Activated CD4-positive, alpha-beta T cell treated with anti-CD3 and anti-CD28 coated beads, Interleukin-2, amount 10 ng/mL, durations not matched to agents 24 days and 14 days (primary cell): ENCODE measurements at regions of chr5 and their contacts with region 1.

Region 1: DNA sequence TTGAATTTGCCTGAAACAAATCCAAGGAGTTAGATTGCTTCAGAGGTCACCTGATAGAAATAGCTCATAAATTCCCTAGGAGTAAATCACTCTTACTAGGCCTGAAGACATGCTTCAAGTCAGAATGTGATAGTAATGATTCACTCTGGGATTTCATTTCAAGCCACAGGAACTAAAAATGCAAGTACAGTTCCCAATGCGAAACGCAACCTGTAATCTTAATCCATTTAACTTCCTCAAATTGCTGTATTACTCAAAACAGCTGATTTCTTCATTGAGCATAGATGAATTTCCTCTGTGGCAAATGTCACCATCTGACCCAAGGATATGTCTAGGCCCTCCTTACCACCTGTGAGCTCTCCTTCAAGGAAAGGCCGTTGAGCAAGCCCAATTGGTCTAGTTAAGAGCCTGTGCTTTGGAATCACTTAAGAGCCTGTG is 32.1 kb upstream of the IL6ST start:
- DNase-seq: no peak
- H3K4me3 Mint-ChIP-seq: no peak overlapping the region
- H3K27ac Mint-ChIP-seq: no peak overlapping the region
- H3K4me1 Mint-ChIP-seq: peaks cover 10% of the 10 kb centered on the region
- H3K27me3 Mint-ChIP-seq: peaks cover 23% of the 10 kb centered on the region

Region 2: DNA sequence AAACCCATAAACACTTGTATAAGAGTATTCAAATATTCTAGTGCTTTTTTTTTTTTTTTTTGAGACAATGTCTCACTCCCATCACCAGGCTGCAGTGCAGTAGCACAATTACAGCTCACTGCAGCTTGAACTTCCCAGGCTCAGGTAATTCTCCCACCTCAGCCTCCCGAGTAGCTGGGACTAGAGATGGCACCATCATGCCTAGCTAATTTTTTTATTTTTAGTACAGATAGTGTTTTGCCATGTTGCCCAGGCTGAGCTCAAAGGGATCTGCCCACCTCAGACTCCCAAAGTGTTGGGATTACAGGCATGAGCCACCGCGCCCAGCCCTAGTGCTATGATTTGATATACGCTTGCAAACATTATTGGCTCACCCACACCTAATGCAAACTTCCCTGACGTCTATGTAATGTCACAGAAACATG is 43.9 kb before region 1 on chr5:
- intact Hi-C with region 1: loop called (anchors 5 kb)
- DNase-seq: peak; percentile 73
- H3K4me3 Mint-ChIP-seq: peak overlapping the region; percentile 43
- H3K27ac Mint-ChIP-seq: peak overlapping the region; percentile 22
- H3K4me1 Mint-ChIP-seq: peaks cover 61% of the 10 kb centered on the region
- H3K27me3 Mint-ChIP-seq: no peaks in the 10 kb centered on the region

Region 3: DNA sequence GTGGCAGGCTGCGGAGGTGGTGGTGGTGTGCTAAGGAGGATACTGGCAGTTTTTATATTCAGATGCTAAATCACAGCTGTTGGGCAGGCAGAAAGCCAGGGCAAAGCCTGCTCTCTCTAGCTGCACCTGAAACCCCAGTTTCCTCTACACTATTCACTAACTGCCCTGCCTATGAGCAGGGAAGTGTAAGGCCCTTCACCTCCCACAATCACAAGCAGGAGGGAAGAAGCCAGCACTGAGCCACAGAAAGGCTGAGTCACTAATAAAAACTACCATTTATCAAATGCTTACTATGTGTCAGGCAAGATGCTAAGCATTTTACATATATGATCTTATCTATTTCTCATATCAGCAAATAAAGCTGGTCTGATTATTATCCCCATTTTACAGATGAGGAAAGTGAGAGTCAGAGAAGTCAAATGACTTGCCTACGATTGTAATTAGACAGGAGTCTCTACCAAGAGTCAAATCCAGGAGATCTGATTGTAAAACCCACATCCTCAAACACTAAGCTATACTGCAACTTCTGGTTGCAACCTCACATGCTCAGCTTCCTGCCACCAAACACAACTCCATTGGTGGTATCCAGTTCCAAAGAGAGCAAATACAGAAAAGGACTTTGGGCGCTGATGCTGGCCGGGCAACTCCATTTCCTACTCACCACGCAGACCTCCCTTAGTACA is 14.5 kb before region 1 on chr5:
- intact Hi-C with region 1: loop called (anchors 1 kb)
- DNase-seq: peak; percentile 84
- H3K4me3 Mint-ChIP-seq: peak overlapping the region; percentile 47
- H3K27ac Mint-ChIP-seq: peak overlapping the region; percentile 47
- H3K4me1 Mint-ChIP-seq: peaks cover 28% of the 10 kb centered on the region
- H3K27me3 Mint-ChIP-seq: no peaks in the 10 kb centered on the region

Region 4: GRCh38 chr5:56050551-56051255 is 23.8 kb after region 1 on chr5:
- intact Hi-C with region 1: loop called (anchors 1 kb)
- DNase-seq: peak; percentile 66
- H3K4me3 Mint-ChIP-seq: peak overlapping the region; percentile 65
- H3K27ac Mint-ChIP-seq: peak overlapping the region; percentile 75
- H3K4me1 Mint-ChIP-seq: peaks cover 26% of the 10 kb centered on the region
- H3K27me3 Mint-ChIP-seq: peaks cover 5% of the 10 kb centered on the region

Region 5: GRCh38 chr5:56128113-56128512 is 101.2 kb after region 1 on chr5:
- intact Hi-C with region 1: no loop called
- DNase-seq: peak; percentile 80
- H3K4me3 Mint-ChIP-seq: peak overlapping the region; percentile 72
- H3K27ac Mint-ChIP-seq: peak overlapping the region; percentile 93
- H3K4me1 Mint-ChIP-seq: peaks cover 46% of the 10 kb centered on the region
- H3K27me3 Mint-ChIP-seq: no peaks in the 10 kb centered on the region

Region 6: DNA sequence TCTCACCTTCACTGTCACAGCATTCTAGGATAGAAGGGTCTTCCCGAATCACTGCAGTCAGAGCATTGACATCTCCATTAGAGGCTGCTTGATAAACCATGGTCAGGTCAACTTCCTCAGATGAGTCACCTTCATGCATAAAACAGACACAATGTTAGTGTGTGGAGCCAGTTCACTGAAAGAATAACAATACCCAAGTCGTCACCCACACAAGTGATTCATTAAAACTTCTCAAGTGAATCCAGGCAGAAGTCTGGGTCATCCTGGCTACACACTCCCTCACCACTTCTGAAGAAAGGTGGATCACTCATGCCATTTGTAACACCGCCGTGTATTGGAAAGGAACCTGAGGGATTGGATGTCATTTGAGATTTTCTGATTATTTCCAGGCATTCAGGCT is 156.6 kb after region 1 on chr5:
- intact Hi-C with region 1: no loop called
- DNase-seq: no peak
- H3K4me3 Mint-ChIP-seq: no peak overlapping the region
- H3K27ac Mint-ChIP-seq: no peak overlapping the region
- H3K4me1 Mint-ChIP-seq: peaks cover 6% of the 10 kb centered on the region
- H3K27me3 Mint-ChIP-seq: peaks cover under 1% of the 10 kb centered on the region